Esophagus squamous epithelium (tissue), 5 donors: ENCODE measurements at regions of chr16 and their contacts with region 1.

Region 1: DNA sequence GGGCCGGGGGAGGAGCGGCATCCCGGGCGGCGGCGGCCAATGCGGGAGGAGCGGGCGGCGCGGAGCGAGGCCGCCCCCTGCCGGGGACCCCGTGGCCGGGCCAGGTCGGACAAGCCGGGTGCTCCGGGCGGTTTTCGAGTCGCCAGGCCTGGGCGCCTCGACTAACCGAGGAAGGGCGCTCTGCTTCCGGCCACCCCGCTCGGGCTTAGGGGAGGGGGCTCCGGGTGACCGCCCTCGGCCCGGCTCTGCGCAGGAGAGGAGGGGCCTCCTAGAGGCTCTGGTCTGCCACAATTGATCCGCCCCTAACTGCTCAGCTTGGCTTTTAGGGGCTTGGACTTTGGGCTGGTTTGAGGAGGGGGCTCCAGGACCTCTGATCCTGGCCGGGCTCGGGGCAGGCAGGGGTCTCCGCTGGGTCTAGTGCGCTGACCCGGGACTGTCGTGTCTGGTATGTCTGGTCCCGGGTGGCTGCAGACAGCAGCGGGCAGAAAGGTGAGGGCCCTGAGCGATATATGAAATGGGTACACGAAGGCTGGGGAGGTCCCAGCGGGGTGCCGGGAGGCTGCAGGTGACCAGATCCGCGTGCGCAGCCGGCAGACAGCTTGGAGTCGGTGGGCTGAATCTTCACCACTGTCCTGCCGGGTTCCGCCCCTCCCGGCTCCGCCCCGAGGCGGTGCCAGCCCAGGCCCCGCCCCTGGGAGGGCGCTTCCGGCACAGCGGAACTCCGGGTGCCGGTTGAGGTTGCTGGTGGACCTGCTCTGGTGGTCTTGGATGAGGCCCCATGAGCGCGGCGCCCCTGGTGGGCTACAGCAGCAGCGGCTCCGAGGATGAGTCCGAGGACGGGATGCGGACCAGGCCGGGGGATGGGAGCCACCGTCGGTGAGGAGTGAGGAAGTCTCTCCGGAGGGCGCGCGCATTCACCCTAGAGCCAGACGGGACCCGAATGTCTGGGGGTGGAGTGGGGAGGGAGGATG is at the start of gene USB1:
- DNase-seq: no peak
- H3K4me3 ChIP-seq: peak within 1 kb of the TSS; percentile 65 to 91 (median 78)
- H3K27ac ChIP-seq: peak within 1 kb of the TSS; percentile 90 to 96 (median 93)
- H3K4me1 ChIP-seq: peaks cover 13 to 48% (median 33%) of the 10 kb centered on the region in 3 donors
- H3K27me3 ChIP-seq: no peaks in the 10 kb centered on the region
- CTCF ChIP-seq: peak; percentile 57 to 84 (median 72)
- POLR2A ChIP-seq: peak in 1 of 4 donors; percentile 72
- total RNA-seq, gene USB1: 11.2 to 23.9 (median 18.6) TPM

Region 2: DNA sequence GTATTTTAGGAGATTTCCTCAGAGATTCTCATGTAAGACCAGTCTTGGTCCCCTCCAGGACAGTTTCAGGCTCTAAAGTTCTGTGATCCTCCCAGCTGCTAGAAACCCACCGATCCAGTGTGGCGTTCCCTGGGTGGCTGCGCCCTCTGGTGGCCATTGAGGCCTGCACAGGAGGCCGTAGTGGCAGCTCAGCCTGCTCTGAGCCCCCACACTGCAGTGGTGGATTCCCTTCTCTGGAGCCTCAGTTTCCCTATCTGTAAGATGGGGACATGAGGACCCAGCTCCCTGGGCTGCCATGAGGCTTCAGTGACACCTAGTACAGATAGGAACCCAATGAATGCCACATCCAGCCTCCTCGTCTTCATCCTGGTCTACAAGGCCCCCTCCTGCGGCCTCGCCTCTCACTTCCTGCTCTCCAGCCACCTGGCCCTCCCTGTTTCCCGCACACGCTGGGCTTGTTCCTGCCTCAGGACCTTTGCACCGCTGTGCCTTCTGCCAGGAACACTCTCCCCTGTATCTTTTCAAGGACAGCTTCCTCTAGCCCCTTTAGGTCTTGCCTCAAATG is 481.1 kb before region 1 on chr16:
- intact Hi-C with region 1: no loop called
- DNase-seq: no peak
- H3K4me3 ChIP-seq: no peak overlapping the region
- H3K27ac ChIP-seq: no peak overlapping the region
- H3K4me1 ChIP-seq: peaks cover 3 to 8% (median 5%) of the 10 kb centered on the region in 3 donors
- H3K27me3 ChIP-seq: no peaks in the 10 kb centered on the region
- CTCF ChIP-seq: peak; percentile 90 to 96 (median 92)
- POLR2A ChIP-seq: no peak

Region 3: GRCh38 chr16:57899771-57900661 is 101.0 kb before region 1 on chr16:
- intact Hi-C with region 1: loop called (anchors 5 kb)
- DNase-seq: no peak
- H3K4me3 ChIP-seq: no peak overlapping the region
- H3K27ac ChIP-seq: no peak overlapping the region
- H3K4me1 ChIP-seq: peaks cover 0 to 11% (median 0%) of the 10 kb centered on the region in 3 donors
- H3K27me3 ChIP-seq: peaks cover 0 to 65% (median 3%) of the 10 kb centered on the region in 4 donors
- CTCF ChIP-seq: peak; percentile 66 to 89 (median 84)
- POLR2A ChIP-seq: no peak

Region 4: GRCh38 chr16:57966133-57966805 is 34.7 kb before region 1 on chr16:
- intact Hi-C with region 1: no loop called
- DNase-seq: no peak
- H3K4me3 ChIP-seq: no peak overlapping the region
- H3K27ac ChIP-seq: no peak overlapping the region
- H3K4me1 ChIP-seq: no peaks in the 10 kb centered on the region
- H3K27me3 ChIP-seq: no peaks in the 10 kb centered on the region
- CTCF ChIP-seq: no peak
- POLR2A ChIP-seq: no peak

Region 5: DNA sequence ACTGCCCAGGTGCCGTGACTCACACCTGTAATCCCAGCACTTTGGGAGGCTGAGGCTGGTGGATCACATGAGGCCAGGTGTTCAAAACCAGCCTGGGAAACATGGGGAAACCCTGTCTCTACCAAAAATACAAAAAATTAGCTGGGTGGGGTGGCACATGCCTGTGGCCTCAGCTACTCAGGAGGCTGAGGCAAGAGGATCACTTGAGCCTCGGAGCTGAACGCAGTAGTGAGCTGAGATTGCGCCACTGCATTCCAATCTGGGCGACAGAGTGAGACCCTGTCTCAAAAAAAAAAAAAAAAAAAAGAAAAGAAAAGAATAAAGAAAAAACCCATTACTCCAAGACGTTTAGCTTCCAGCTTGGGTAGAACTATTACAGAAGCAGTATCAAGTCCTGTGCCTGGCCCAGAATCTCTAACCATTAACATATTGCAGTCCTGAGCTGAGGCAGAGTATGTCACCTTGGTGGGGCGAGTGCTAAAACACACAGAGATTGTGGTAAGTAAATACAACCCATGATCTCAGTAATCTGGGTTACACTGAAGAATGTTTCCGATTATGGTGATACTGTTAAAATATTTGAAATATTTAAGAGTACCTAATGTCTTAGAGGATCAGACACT is 151.4 kb after region 1 on chr16:
- intact Hi-C with region 1: no loop called
- DNase-seq: no peak
- H3K4me3 ChIP-seq: no peak overlapping the region
- H3K27ac ChIP-seq: no peak overlapping the region
- H3K4me1 ChIP-seq: no peaks in the 10 kb centered on the region
- H3K27me3 ChIP-seq: no peaks in the 10 kb centered on the region
- CTCF ChIP-seq: no peak
- POLR2A ChIP-seq: no peak